HepG2 (cell line): ENCODE measurements at regions of chr1 and their contacts with region 1.

Region 1: GRCh38 chr1:25239681-25240541 is 7.3 kb downstream of the RSRP1 start:
- DNase-seq: peak; percentile 83
- ATAC-seq: peak; percentile 94
- H3K4me3 ChIP-seq: peak overlapping the region; percentile 51 to 76 (median 63)
- H3K27ac ChIP-seq: peak overlapping the region; percentile 64
- H3K4me1 ChIP-seq: peaks cover 38% of the 10 kb centered on the region
- H3K27me3 ChIP-seq: no peaks in the 10 kb centered on the region
- CTCF ChIP-seq: peak; percentile 83
- EP300 ChIP-seq: no peak
- POLR2A ChIP-seq: peak; percentile 74 to 84
- RAD21 ChIP-seq: peak; percentile 77

Region 2: GRCh38 chr1:24955161-24955560 is 284.8 kb before region 1 on chr1:
- CTCF ChIA-PET with region 1: no interaction called
- POLR2A ChIA-PET with region 1: no interaction called
- in situ Hi-C with region 1: no loop called
- intact Hi-C with region 1: no loop called
- DNase-seq: no peak
- ATAC-seq: no peak
- H3K4me3 ChIP-seq: no peak overlapping the region
- H3K27ac ChIP-seq: no peak overlapping the region
- H3K4me1 ChIP-seq: peaks cover 8% of the 10 kb centered on the region
- H3K27me3 ChIP-seq: peaks cover 2 to 40% of the 10 kb centered on the region in 2 experiments; a peak in 3 of 5 replicates
- CTCF ChIP-seq: no peak
- EP300 ChIP-seq: no peak
- POLR2A ChIP-seq: no peak
- RAD21 ChIP-seq: no peak

Region 3: DNA sequence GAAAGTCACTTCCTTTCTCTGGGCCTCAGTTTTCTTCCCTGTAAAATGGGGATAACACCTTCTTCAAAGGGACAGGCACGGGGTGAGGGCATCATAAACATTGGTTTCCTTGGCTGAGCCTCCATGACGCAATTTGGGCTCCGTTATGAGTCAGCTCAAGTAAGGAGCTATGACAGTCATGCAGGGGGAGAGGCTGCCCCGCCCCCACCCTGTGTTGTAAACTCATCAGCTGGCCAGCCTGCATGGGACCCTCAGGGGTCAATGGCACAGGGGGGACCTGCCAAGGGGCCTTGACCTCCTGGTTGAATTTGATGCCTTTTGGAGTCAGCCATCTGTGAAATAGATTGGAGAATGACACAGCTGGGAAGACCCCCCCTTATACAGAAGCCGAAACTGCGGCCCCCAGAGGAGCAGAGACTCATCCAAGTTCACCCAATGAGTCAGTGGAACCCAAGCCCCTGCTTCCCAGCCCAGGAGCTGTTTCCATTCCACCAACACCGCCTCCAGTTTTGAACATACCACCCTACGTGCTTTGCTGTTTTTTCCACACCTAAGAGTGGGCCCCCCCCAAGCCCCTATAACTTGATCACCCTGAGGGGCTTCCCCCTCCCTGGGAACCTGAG is 273.1 kb before region 1 on chr1:
- CTCF ChIA-PET with region 1: no interaction called
- POLR2A ChIA-PET with region 1: no interaction called
- in situ Hi-C with region 1: no loop called
- intact Hi-C with region 1: no loop called
- DNase-seq: no peak
- ATAC-seq: no peak
- H3K4me3 ChIP-seq: no peak overlapping the region
- H3K27ac ChIP-seq: no peak overlapping the region
- H3K4me1 ChIP-seq: no peaks in the 10 kb centered on the region
- H3K27me3 ChIP-seq: peaks cover 3 to 54% of the 10 kb centered on the region in 2 experiments; a peak in 3 of 5 replicates
- CTCF ChIP-seq: no peak
- EP300 ChIP-seq: no peak
- POLR2A ChIP-seq: no peak
- RAD21 ChIP-seq: no peak

Region 4: DNA sequence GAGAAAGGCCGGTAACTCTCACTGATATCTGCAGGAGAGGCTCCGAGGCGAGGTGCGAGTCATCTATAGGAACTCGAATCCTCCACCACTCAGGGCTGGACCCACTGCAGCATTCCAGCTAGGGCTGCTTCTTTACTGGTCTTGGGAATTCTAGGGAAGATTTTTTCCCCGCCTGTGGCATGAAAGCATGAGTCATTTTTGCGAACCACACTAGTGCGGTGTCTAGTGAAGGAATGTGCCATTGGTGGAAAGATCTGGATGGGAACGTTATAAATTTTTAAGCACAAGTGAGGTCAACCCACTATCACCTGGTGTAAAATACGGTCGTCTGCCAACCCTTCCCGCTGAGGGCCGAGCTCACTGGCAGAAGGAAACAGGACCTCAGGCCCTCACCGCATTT is 57.3 kb before region 1 on chr1:
- CTCF ChIA-PET with region 1: no interaction called
- POLR2A ChIA-PET with region 1: no interaction called
- in situ Hi-C with region 1: no loop called
- intact Hi-C with region 1: no loop called
- DNase-seq: no peak
- ATAC-seq: no peak
- H3K4me3 ChIP-seq: no peak overlapping the region
- H3K27ac ChIP-seq: no peak overlapping the region
- H3K4me1 ChIP-seq: peaks cover 22% of the 10 kb centered on the region
- H3K27me3 ChIP-seq: no peaks in the 10 kb centered on the region
- CTCF ChIP-seq: no peak
- EP300 ChIP-seq: no peak
- POLR2A ChIP-seq: no peak
- RAD21 ChIP-seq: no peak

Region 5: DNA sequence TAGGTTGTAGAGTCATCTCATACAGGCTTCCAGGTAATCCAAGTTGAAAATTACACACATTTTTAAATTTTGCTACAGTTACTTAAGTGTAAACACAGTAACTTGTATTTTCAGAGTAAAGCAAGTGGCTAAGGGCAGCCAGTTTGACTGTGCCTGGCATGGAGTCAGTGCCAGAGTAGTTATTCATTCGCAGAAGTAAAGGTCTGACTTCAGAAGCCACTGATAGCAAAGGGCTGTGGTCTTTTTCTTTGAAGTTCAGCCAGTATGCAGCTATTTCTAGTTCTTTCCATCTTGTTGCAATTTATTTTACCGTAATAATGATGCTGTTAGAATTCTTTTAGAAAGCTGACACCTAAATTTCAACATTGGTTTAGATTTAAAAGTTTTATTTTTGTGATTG is 107.6 kb after region 1 on chr1:
- CTCF ChIA-PET with region 1: no interaction called
- POLR2A ChIA-PET with region 1: no interaction called
- in situ Hi-C with region 1: loop called (anchors 5 kb)
- intact Hi-C with region 1: no loop called
- DNase-seq: no peak
- ATAC-seq: no peak
- H3K4me3 ChIP-seq: no peak overlapping the region
- H3K27ac ChIP-seq: no peak overlapping the region
- H3K4me1 ChIP-seq: no peaks in the 10 kb centered on the region
- H3K27me3 ChIP-seq: no peaks in the 10 kb centered on the region
- CTCF ChIP-seq: no peak
- EP300 ChIP-seq: no peak
- POLR2A ChIP-seq: no peak
- RAD21 ChIP-seq: no peak